ENCODE measurements at regions of chr3 and their contacts with region 1.

Region 1: DNA sequence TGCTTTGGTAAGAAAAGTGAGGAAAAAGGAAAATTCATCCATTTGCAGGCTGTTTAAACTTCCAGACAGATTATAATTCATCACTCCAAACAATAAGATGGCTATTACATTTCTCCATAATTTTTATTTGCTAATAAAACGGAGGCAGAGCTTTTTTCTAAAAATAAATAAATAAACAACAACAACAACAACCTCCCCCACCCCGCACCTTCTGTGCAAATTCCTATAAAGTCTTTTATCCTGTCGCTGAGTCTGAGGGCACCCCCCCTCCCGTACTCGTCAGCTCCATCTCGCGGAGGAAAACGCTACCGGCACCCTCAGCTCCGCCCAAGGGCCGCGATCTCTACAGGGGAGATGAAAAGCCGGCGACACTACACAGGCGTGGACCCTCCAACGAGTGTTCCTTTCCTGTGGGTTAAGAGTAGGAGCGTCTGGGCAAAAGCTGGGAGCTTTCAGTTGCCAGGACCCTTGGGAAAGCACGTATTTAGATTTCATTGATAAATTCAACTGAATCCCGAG is 1.0 kb upstream of the ATP1B3 start:
- DNase-seq: peak; percentile 87
- H3K4me3 Mint-ChIP-seq: peak overlapping the region; percentile 80
- H3K27ac Mint-ChIP-seq: peak overlapping the region; percentile 98
- H3K4me1 Mint-ChIP-seq: peaks cover 35% of the 10 kb centered on the region
- H3K27me3 Mint-ChIP-seq: no peaks in the 10 kb centered on the region

Region 2: DNA sequence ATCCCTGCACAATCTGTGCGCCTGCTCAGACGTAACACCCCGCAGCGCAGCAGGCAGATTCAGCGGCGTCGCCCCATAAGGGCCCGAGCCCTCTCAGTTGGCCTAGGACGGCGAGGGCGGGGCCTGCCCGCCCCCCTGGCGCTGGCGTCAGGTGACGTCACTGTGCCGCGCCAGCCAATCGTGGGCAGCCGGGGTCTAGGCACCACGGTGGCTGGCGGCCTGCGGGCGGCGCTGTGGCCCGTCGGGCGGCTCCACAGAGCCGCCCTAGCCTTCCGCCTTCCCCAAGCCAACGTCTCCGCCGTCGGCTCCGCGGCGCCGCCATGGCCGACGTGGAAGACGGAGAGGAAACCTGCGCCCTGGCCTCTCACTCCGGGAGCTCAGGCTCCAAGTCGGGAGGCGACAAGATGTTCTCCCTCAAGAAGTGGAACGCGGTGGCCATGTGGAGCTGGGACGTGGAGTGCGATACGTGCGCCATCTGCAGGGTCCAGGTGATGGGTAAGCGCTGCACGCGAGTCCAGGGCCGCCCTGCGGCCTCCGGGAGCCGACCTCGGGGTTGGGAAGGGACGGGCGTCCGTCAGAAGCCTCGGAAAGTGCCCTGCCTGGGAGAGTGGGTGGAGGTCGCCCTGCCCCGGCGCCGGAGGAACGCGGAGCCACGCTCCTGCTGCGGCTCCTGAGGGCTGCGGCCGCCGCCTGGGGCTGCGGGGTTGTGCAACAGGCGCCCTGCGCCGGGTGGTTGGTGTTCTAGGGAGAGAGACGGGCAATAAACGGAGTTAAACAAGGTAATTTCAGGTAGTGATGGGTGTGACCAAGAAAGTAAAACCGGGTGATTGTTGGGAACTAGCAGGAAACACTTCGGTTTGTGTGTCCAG is 137.2 kb before region 1 on chr3 and contains the start of gene RNF7:
- CTCF ChIA-PET with region 1: interaction called, 13 read pairs
- POLR2A ChIA-PET with region 1: no interaction called
- DNase-seq: peak; percentile 95
- H3K4me3 Mint-ChIP-seq: peak within 1 kb of the TSS; percentile 96
- H3K27ac Mint-ChIP-seq: peak within 1 kb of the TSS; percentile 98
- H3K4me1 Mint-ChIP-seq: peaks cover 43% of the 10 kb centered on the region
- H3K27me3 Mint-ChIP-seq: no peaks in the 10 kb centered on the region
- total RNA-seq, gene RNF7: 48.6 to 51.4 TPM

Region 3: DNA sequence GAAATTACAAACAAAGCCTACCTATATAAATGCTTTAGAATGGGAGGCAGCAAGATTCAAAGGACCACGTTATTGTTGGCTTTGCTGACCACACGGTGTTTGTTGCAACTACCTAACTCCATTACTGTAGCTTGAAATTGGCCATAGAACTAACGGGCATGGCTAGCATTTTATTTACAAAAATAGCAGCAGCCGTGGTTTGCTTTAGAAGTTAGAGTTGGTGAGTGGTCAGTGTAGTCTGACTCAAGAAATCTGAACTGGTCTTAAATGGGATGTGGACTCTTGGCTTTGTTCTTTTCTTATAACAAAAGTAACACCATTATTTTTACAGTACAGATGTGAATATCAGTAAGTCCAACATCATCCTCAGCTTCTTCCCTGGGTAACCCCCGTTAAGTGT is 11.6 kb after region 1 on chr3:
- CTCF ChIA-PET with region 1: interaction called, 11 read pairs
- POLR2A ChIA-PET with region 1: no interaction called
- DNase-seq: no peak
- H3K4me3 Mint-ChIP-seq: no peak overlapping the region
- H3K27ac Mint-ChIP-seq: no peak overlapping the region
- H3K4me1 Mint-ChIP-seq: peaks cover 28% of the 10 kb centered on the region
- H3K27me3 Mint-ChIP-seq: no peaks in the 10 kb centered on the region

Region 4: DNA sequence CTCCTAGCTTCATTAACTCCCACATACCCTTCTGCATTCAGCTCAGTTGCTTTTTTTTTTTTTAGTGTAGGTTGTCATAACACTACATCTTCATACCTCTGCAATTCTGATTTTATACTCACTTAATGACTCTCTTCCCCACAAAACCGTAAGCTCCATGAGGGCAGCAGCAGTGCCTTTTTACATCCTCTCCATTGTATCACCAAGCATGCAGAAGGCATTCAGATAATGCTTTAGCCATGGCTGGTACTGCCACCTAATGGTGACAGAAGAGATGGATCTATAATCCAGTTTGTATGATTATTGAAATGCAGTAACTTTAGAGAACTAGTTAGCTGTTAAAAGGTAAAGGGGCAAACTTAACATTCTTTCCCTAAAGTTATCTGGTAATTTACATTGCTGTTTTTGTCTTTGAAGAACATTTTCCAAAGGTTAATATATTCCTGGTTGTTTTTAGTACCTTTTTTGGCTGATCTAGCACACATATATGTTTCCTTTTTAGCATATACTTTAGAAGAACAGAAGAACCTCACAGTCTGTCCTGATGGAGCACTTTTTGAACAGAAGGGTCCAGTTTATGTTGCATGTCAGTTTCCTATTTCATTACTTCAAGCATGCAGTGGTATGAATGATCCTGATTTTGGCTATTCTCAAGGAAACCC is 37.8 kb after region 1 on chr3:
- CTCF ChIA-PET with region 1: interaction called, 12 read pairs
- POLR2A ChIA-PET with region 1: interaction called, 4 read pairs
- DNase-seq: peak; percentile 75
- H3K4me3 Mint-ChIP-seq: no peak overlapping the region
- H3K27ac Mint-ChIP-seq: no peak overlapping the region
- H3K4me1 Mint-ChIP-seq: peaks cover 4% of the 10 kb centered on the region
- H3K27me3 Mint-ChIP-seq: no peaks in the 10 kb centered on the region

Measured in activated CD4-positive, alpha-beta T cell treated with anti-CD3 and anti-CD28 coated beads, Interleukin-2, amount 10 ng/mL, durations not matched to agents 7 days and 5 days (primary cell).